Activated B cell treated with CpG ODN at 0.5 μM for 24 hours (primary cell): ENCODE measurements at regions of chr2 and their contacts with region 1.

Region 1: GRCh38 chr2:33272001-33272400 is 204.4 kb upstream of the RASGRP3 start:
- DNase-seq: no peak
- ATAC-seq: peak; percentile 90
- H3K4me3 Mint-ChIP-seq: peak overlapping the region; percentile 15
- H3K27ac Mint-ChIP-seq: no peak overlapping the region
- H3K4me1 Mint-ChIP-seq: peaks cover 21% of the 10 kb centered on the region
- H3K27me3 Mint-ChIP-seq: peaks cover 14% of the 10 kb centered on the region
- CTCF ChIP-seq: no peak

Region 2: GRCh38 chr2:32946314-32947075 is 325.5 kb before region 1 on chr2 and contains the start of gene LTBP1:
- CTCF ChIA-PET with region 1: no interaction called
- POLR2A ChIA-PET with region 1: interaction called, 3 read pairs
- intact Hi-C with region 1: loop called (anchors 5 kb)
- DNase-seq: peak; percentile 41
- ATAC-seq: peak; percentile 78
- H3K4me3 Mint-ChIP-seq: peak within 1 kb of the TSS; percentile 83
- H3K27ac Mint-ChIP-seq: no peak within 1 kb of the TSS
- H3K4me1 Mint-ChIP-seq: peaks cover 15% of the 10 kb centered on the region
- H3K27me3 Mint-ChIP-seq: peaks cover 29% of the 10 kb centered on the region
- CTCF ChIP-seq: no peak
- total RNA-seq, gene LTBP1: 0.07 TPM in 1 of 2 replicates, not detected in the other

Region 3: DNA sequence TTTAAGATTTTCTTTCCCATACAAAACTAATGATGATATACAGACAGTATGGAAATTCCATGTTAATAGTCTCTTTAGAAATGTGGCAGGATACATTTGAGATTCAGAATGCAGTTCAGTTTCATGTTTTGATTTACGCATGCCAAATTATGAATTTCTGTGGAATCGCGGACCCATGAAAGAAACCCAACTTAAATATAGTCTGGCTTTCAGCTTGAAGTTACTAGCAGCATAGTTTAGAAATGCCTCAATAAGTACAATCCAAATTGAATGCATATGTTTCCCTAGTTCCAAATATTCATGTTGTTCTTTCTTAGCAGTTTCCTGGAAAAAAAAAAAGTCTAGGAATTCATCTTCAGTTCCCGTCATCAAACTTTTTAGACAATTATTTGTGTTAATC is 40.4 kb after region 1 on chr2:
- CTCF ChIA-PET with region 1: no interaction called
- POLR2A ChIA-PET with region 1: no interaction called
- intact Hi-C with region 1: no loop called
- DNase-seq: no peak
- ATAC-seq: no peak
- H3K4me3 Mint-ChIP-seq: no peak overlapping the region
- H3K27ac Mint-ChIP-seq: no peak overlapping the region
- H3K4me1 Mint-ChIP-seq: no peaks in the 10 kb centered on the region
- H3K27me3 Mint-ChIP-seq: peaks cover 6% of the 10 kb centered on the region
- CTCF ChIP-seq: no peak

Region 4: GRCh38 chr2:33412920-33413319 is 140.9 kb after region 1 on chr2:
- CTCF ChIA-PET with region 1: no interaction called
- POLR2A ChIA-PET with region 1: no interaction called
- intact Hi-C with region 1: no loop called
- DNase-seq: no peak
- ATAC-seq: no peak
- H3K4me3 Mint-ChIP-seq: no peak overlapping the region
- H3K27ac Mint-ChIP-seq: no peak overlapping the region
- H3K4me1 Mint-ChIP-seq: no peaks in the 10 kb centered on the region
- H3K27me3 Mint-ChIP-seq: no peaks in the 10 kb centered on the region
- CTCF ChIP-seq: no peak

Region 5: DNA sequence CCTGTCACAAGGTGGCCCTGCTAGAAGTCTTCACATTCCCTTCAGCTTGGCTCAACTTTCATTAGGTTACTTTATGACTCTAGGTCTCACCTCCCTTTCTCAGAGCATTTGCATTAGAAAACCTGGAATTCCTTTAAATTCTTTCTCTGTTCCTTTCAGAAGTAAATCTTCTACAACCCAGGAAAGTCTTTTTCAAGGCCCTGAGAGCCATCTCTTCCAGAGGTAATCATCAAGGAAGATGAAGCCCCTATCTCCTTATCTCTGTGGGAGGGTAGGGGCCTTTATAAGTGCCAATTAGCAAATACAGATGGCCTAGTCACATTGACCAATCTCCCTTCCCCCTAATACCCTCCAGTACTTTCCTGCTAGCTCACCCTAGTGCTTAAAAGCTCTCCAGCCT is 1175.1 kb after region 1 on chr2:
- CTCF ChIA-PET with region 1: no interaction called
- POLR2A ChIA-PET with region 1: no interaction called
- intact Hi-C with region 1: no loop called
- DNase-seq: no peak
- ATAC-seq: no peak
- H3K4me3 Mint-ChIP-seq: no peak overlapping the region
- H3K27ac Mint-ChIP-seq: no peak overlapping the region
- H3K4me1 Mint-ChIP-seq: no peaks in the 10 kb centered on the region
- H3K27me3 Mint-ChIP-seq: no peaks in the 10 kb centered on the region
- CTCF ChIP-seq: no peak